Caco-2 (cell line): ENCODE measurements at regions of chr11 and their contacts with region 1.

Region 1: GRCh38 chr11:8870411-8871170 is 40.4 kb upstream of the AKIP1 start:
- DNase-seq: peak; percentile 81 to 82
- H3K4me3 ChIP-seq: peak overlapping the region; percentile 70
- H3K4me3 Mint-ChIP-seq: peak overlapping the region; percentile 84
- H3K27ac Mint-ChIP-seq: peak overlapping the region; percentile 83
- H3K4me1 ChIP-seq: peaks cover 30% of the 10 kb centered on the region
- H3K4me1 Mint-ChIP-seq: peaks cover 15% of the 10 kb centered on the region
- H3K27me3 ChIP-seq: no peaks in the 10 kb centered on the region
- H3K27me3 Mint-ChIP-seq: no peaks in the 10 kb centered on the region
- CTCF ChIP-seq: no peak

Region 2: GRCh38 chr11:8794677-8795103 is 75.9 kb before region 1 on chr11:
- CTCF ChIA-PET with region 1: no interaction called
- POLR2A ChIA-PET with region 1: no interaction called
- intact Hi-C with region 1: no loop called
- DNase-seq: peak; percentile 86 to 89
- H3K4me3 ChIP-seq: peak overlapping the region; percentile 33
- H3K4me3 Mint-ChIP-seq: peak overlapping the region; percentile 68
- H3K27ac Mint-ChIP-seq: peak overlapping the region; percentile 83
- H3K4me1 ChIP-seq: peaks cover 31% of the 10 kb centered on the region
- H3K4me1 Mint-ChIP-seq: peaks cover 38% of the 10 kb centered on the region
- H3K27me3 ChIP-seq: no peaks in the 10 kb centered on the region
- H3K27me3 Mint-ChIP-seq: no peaks in the 10 kb centered on the region
- CTCF ChIP-seq: peak; percentile 82 to 94

Region 3: GRCh38 chr11:8826139-8826786 is 44.3 kb before region 1 on chr11:
- CTCF ChIA-PET with region 1: no interaction called
- POLR2A ChIA-PET with region 1: no interaction called
- intact Hi-C with region 1: loop called (anchors 2 kb)
- DNase-seq: peak; percentile 41 to 75
- H3K4me3 ChIP-seq: no peak overlapping the region
- H3K4me3 Mint-ChIP-seq: no peak overlapping the region
- H3K27ac Mint-ChIP-seq: no peak overlapping the region
- H3K4me1 ChIP-seq: peaks cover 31% of the 10 kb centered on the region
- H3K4me1 Mint-ChIP-seq: no peaks in the 10 kb centered on the region
- H3K27me3 ChIP-seq: no peaks in the 10 kb centered on the region
- H3K27me3 Mint-ChIP-seq: no peaks in the 10 kb centered on the region
- CTCF ChIP-seq: no peak